ENCODE measurements at regions of chr18 and their contacts with region 1.

Region 1: DNA sequence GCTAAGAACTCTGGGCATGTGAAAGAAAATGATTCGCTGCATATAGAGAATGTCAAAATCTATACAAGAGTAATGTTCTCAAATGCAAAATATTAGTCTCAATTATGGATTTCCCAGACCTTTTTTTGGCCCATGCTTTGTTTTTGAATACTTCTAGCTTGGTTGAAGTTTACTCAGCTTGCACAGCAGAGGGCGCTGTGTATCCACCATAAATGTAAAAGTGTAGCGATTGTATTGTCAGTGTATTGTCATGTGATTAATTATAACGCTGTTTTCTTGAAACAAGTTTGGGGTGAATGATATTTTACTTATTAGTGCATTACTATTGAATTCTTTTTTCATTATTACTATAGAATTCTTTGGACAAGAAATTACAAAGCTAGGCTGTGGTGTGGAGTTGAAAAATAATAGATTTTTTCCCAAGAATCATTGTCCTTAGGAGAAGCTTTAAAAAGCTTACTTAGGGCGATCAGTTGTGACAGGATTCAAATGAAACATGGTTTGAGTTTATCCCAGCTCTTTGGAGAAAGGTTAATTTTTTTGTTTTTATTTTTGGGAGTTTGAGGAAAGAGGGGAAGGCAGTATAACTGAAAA is 98.3 kb downstream of the PIK3C3 start:
- DNase-seq: peak; percentile 40 to 50 (median 44)
- H3K4me3 ChIP-seq: no peak overlapping the region
- H3K4me3 Mint-ChIP-seq: peak overlapping the region in 1 of 8 donors; percentile 13
- H3K27ac ChIP-seq: no peak overlapping the region
- H3K27ac Mint-ChIP-seq: peak overlapping the region in 2 of 7 donors; percentile 41 to 70
- H3K4me1 ChIP-seq: no peaks in the 10 kb centered on the region
- H3K4me1 Mint-ChIP-seq: peaks cover 6 to 13% (median 8%) of the 10 kb centered on the region in 4 donors
- H3K27me3 ChIP-seq: no peaks in the 10 kb centered on the region
- H3K27me3 Mint-ChIP-seq: no peaks in the 10 kb centered on the region

Region 2: DNA sequence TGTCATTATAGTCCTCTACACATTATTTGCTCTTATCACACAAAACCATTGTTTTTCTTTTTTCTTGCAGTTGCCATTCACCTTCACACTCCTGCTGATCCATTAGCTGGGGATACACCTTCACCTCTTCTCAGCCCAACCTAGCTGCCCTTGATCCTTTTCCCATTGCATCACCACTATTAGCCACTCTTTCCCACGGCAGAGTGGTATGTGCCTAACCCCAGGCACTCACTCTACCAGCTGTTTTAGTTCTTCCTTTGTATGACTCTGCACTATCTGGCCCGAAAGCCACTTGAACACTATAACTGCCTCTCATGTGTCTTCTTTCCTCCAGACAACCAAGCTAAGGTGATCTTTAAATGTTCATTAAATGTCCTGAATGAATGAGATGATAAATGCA is 243.6 kb before region 1 on chr18:
- CTCF ChIA-PET with region 1: no interaction called
- POLR2A ChIA-PET with region 1: no interaction called
- intact Hi-C with region 1: no loop called
- DNase-seq: no peak
- H3K4me3 ChIP-seq: no peak overlapping the region
- H3K4me3 Mint-ChIP-seq: no peak overlapping the region
- H3K27ac ChIP-seq: no peak overlapping the region
- H3K27ac Mint-ChIP-seq: peak overlapping the region in 1 of 7 donors; percentile 5
- H3K4me1 ChIP-seq: no peaks in the 10 kb centered on the region
- H3K4me1 Mint-ChIP-seq: no peaks in the 10 kb centered on the region
- H3K27me3 ChIP-seq: no peaks in the 10 kb centered on the region
- H3K27me3 Mint-ChIP-seq: peaks cover 0 to 2% of the 10 kb centered on the region in 2 donors

Region 3: GRCh38 chr18:42028247-42028832 is 24.9 kb before region 1 on chr18:
- CTCF ChIA-PET with region 1: interaction called, 17 read pairs
- POLR2A ChIA-PET with region 1: no interaction called
- intact Hi-C with region 1: no loop called
- DNase-seq: peak; percentile 18 to 48 (median 30)
- H3K4me3 ChIP-seq: no peak overlapping the region
- H3K4me3 Mint-ChIP-seq: no peak overlapping the region
- H3K27ac ChIP-seq: no peak overlapping the region
- H3K27ac Mint-ChIP-seq: peak overlapping the region in 1 of 7 donors; percentile 42
- H3K4me1 ChIP-seq: peaks cover 24% of the 10 kb centered on the region
- H3K4me1 Mint-ChIP-seq: peaks cover 14 to 29% (median 23%) of the 10 kb centered on the region in 4 donors
- H3K27me3 ChIP-seq: no peaks in the 10 kb centered on the region
- H3K27me3 Mint-ChIP-seq: no peaks in the 10 kb centered on the region

Region 4: DNA sequence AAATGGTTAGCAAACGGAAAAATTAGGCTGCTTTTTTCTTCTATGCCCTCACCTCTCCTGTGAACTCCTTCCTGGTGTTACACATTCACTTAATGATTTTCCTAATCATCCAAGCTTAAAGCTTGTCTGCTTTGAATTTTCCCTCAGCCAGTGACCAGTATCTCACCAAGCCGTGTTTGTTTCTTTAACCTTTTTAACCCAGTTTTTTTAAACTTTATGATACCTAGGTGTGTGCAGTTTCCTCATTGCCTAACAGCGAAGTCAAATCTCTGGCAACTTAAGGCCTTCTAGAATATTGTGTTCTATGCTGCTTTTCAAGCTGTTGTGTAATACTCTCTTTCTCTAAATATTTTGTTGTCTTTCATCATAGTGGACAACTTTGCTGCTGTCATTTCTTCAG is 14.7 kb after region 1 on chr18:
- CTCF ChIA-PET with region 1: interaction called, 11 read pairs
- POLR2A ChIA-PET with region 1: no interaction called
- intact Hi-C with region 1: no loop called
- DNase-seq: no peak
- H3K4me3 ChIP-seq: no peak overlapping the region
- H3K4me3 Mint-ChIP-seq: no peak overlapping the region
- H3K27ac ChIP-seq: no peak overlapping the region
- H3K27ac Mint-ChIP-seq: peak overlapping the region in 1 of 7 donors; percentile 70
- H3K4me1 ChIP-seq: no peaks in the 10 kb centered on the region
- H3K4me1 Mint-ChIP-seq: no peaks in the 10 kb centered on the region
- H3K27me3 ChIP-seq: no peaks in the 10 kb centered on the region
- H3K27me3 Mint-ChIP-seq: no peaks in the 10 kb centered on the region

Region 5: GRCh38 chr18:42114310-42114943 is 61.1 kb after region 1 on chr18:
- CTCF ChIA-PET with region 1: interaction called, 14 read pairs
- POLR2A ChIA-PET with region 1: no interaction called
- intact Hi-C with region 1: no loop called
- DNase-seq: peak; percentile 49 to 53 (median 51)
- H3K4me3 ChIP-seq: no peak overlapping the region
- H3K4me3 Mint-ChIP-seq: peak overlapping the region in 5 of 8 donors; percentile 11 to 59 (median 34)
- H3K27ac ChIP-seq: no peak overlapping the region
- H3K27ac Mint-ChIP-seq: peak overlapping the region in 1 of 7 donors; percentile 43
- H3K4me1 ChIP-seq: peaks cover 10% of the 10 kb centered on the region
- H3K4me1 Mint-ChIP-seq: peaks cover 7 to 14% (median 11%) of the 10 kb centered on the region in 4 donors
- H3K27me3 ChIP-seq: no peaks in the 10 kb centered on the region
- H3K27me3 Mint-ChIP-seq: peaks cover 0 to 5% of the 10 kb centered on the region in 2 donors

Region 6: GRCh38 chr18:43596105-43596712 is 1542.9 kb after region 1 on chr18:
- CTCF ChIA-PET with region 1: no interaction called
- POLR2A ChIA-PET with region 1: no interaction called
- intact Hi-C with region 1: loop called (anchors 5 kb)
- DNase-seq: no peak
- H3K4me3 ChIP-seq: no peak overlapping the region
- H3K4me3 Mint-ChIP-seq: no peak overlapping the region
- H3K27ac ChIP-seq: no peak overlapping the region
- H3K27ac Mint-ChIP-seq: no peak overlapping the region
- H3K4me1 ChIP-seq: no peaks in the 10 kb centered on the region
- H3K4me1 Mint-ChIP-seq: no peaks in the 10 kb centered on the region
- H3K27me3 ChIP-seq: no peaks in the 10 kb centered on the region
- H3K27me3 Mint-ChIP-seq: no peaks in the 10 kb centered on the region